ENCODE measurements at regions of chr2 and their contacts with region 1.

Region 1: GRCh38 chr2:233251306-233252116 is at the start of gene ATG16L1:
- DNase-seq: peak; percentile 94
- ATAC-seq: peak; percentile 100
- H3K4me3 ChIP-seq: peak within 1 kb of the TSS; percentile 81
- H3K27ac ChIP-seq: peak within 1 kb of the TSS; percentile 58
- H3K4me1 ChIP-seq: no peaks in the 10 kb centered on the region
- H3K27me3 ChIP-seq: no peaks in the 10 kb centered on the region
- CTCF ChIP-seq: peak; percentile 100
- POLR2A ChIP-seq: peak; percentile 74
- RAD21 ChIP-seq: peak; percentile 98
- total RNA-seq, gene ATG16L1: 26.2 and 26.9 TPM in 2 replicates

Region 2: DNA sequence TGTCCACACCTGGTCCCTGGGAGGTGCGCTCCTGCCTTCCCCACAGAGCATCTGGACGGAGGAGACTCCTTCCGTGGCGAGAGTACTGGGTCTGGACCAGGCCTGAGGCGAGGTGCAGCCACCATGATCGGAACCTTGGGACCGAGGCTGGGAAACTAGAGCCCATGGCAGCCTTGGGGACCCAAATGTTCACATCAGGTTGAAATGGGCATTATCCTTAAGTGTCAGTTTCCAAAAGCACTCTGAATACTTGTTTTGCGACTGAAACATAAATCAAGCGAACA is 553.7 kb before region 1 on chr2:
- CTCF ChIA-PET with region 1: no interaction called
- POLR2A ChIA-PET with region 1: no interaction called
- dilution Hi-C with region 1: no loop called
- in situ Hi-C with region 1: no loop called
- intact Hi-C with region 1: loop called (anchors 2 kb)
- DNase-seq: no peak
- ATAC-seq: peak; percentile 8
- H3K4me3 ChIP-seq: peak overlapping the region; percentile 78
- H3K27ac ChIP-seq: peak overlapping the region; percentile 66
- H3K4me1 ChIP-seq: peaks cover 6% of the 10 kb centered on the region
- H3K27me3 ChIP-seq: no peaks in the 10 kb centered on the region; the same call in 1 of the 2 replicates
- CTCF ChIP-seq: no peak
- POLR2A ChIP-seq: no peak
- RAD21 ChIP-seq: no peak

Region 3: DNA sequence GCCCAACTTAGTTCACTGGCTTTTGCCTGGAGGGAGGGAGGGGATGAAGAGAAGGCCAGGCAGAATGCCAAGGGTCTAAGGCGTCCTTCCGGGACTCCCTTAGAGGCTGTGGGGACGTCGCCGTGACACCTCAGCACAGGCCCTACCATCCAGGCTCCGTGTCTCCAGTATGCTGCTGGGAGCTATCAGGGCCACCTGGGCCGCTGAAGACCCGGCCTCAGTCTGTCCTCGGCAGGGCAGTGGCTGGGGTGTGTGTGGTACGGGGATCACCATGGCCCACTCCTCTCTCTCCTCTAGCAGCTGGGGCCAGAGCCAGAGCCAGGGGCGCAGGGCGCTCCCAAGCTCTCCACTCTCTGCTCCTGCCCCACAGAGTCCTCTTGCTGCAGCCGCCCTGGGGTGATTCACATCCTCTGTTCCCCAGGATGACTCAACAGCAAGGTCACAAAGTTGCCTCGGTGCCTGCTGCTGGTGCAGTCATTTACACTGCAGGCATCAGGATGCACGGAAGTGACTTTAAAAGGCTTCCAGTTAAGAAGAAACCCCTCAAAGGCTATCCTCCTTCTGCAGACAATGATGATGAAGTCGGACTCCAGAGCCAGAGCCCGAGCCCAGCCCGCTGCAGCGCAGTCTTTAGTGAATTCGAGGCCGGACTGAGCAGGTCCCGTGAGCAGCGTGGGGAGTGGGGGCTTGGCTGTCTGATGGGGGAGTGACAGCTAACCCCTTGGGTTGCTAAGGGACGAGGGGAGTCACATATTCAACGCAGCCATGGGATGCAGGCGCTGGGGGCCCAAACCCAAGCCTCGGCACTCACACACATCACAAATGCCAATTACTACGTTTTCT is 349.6 kb before region 1 on chr2:
- CTCF ChIA-PET with region 1: no interaction called
- POLR2A ChIA-PET with region 1: no interaction called
- dilution Hi-C with region 1: no loop called
- in situ Hi-C with region 1: no loop called
- intact Hi-C with region 1: loop called (anchors 1 kb)
- DNase-seq: peak; percentile 94
- ATAC-seq: peak; percentile 99
- H3K4me3 ChIP-seq: no peak overlapping the region
- H3K27ac ChIP-seq: peak overlapping the region; percentile 80
- H3K4me1 ChIP-seq: peaks cover 9% of the 10 kb centered on the region
- H3K27me3 ChIP-seq: no peaks in the 10 kb centered on the region
- CTCF ChIP-seq: no peak
- POLR2A ChIP-seq: no peak
- RAD21 ChIP-seq: peak; percentile 21; the same call in 1 of the 2 replicates

Region 4: GRCh38 chr2:233053928-233054784 is 197.4 kb before region 1 on chr2:
- CTCF ChIA-PET with region 1: interaction called, 4 read pairs
- POLR2A ChIA-PET with region 1: no interaction called
- dilution Hi-C with region 1: no loop called
- in situ Hi-C with region 1: no loop called
- intact Hi-C with region 1: loop called (anchors 1 kb)
- DNase-seq: peak; percentile 23
- ATAC-seq: peak; percentile 87
- H3K4me3 ChIP-seq: no peak overlapping the region
- H3K27ac ChIP-seq: no peak overlapping the region
- H3K4me1 ChIP-seq: no peaks in the 10 kb centered on the region
- H3K27me3 ChIP-seq: peaks cover 28% of the 10 kb centered on the region
- CTCF ChIP-seq: peak; percentile 75
- POLR2A ChIP-seq: no peak
- RAD21 ChIP-seq: peak; percentile 72

Region 5: GRCh38 chr2:233217892-233218377 is 33.6 kb before region 1 on chr2:
- CTCF ChIA-PET with region 1: no interaction called
- POLR2A ChIA-PET with region 1: no interaction called
- dilution Hi-C with region 1: no loop called
- in situ Hi-C with region 1: no loop called
- intact Hi-C with region 1: no loop called
- DNase-seq: no peak
- ATAC-seq: no peak
- H3K4me3 ChIP-seq: no peak overlapping the region
- H3K27ac ChIP-seq: no peak overlapping the region
- H3K4me1 ChIP-seq: no peaks in the 10 kb centered on the region
- H3K27me3 ChIP-seq: peaks cover 12% of the 10 kb centered on the region; the same call in 1 of the 2 replicates
- CTCF ChIP-seq: no peak
- POLR2A ChIP-seq: no peak
- RAD21 ChIP-seq: no peak

Region 6: DNA sequence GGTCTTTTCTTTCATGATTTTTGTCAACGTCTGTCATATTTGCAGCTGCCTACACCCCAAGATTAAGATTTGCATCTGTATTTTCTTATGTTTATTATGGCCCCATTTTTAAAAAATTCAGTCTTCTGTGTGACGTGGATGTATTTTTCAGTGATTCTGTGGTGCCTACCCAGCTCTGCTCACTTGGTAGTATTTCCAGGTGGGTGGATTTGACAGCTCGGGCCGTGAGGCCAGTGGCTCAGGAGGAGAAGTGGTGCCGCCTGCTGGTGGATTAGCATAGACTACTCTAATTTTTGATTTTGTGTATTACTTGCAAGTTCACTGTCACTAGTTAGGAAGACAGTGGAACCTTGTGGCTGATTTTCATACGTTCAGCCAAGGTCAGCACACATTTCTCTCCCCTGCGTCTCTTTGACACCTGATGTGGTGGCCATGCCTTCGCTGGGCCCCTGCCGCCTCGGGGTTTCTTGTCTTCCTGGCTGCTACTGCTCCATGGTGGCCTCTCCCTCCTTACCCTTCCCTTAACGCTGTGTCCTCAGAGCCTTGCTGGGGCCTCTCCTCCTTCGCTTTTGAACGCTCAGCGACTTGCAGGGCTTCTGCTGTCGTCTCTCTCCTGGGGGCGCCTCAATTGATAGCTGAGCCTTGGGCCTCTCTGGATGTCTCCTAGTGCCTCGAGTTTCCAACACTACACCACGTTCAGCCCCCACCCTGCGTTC is 192.1 kb after region 1 on chr2:
- CTCF ChIA-PET with region 1: no interaction called
- POLR2A ChIA-PET with region 1: no interaction called
- dilution Hi-C with region 1: no loop called
- in situ Hi-C with region 1: no loop called
- intact Hi-C with region 1: loop called (anchors 1 kb)
- DNase-seq: peak; percentile 83
- ATAC-seq: peak; percentile 90
- H3K4me3 ChIP-seq: no peak overlapping the region
- H3K27ac ChIP-seq: no peak overlapping the region
- H3K4me1 ChIP-seq: no peaks in the 10 kb centered on the region
- H3K27me3 ChIP-seq: no peaks in the 10 kb centered on the region
- CTCF ChIP-seq: peak; percentile 91
- POLR2A ChIP-seq: peak; percentile 30; the same call in 1 of the 2 replicates
- RAD21 ChIP-seq: peak; percentile 95

Measured in IMR-90 (cell line).